Motor neuron (in vitro differentiated cells): ENCODE measurements at regions of chr1 and their contacts with region 1.

Region 1: DNA sequence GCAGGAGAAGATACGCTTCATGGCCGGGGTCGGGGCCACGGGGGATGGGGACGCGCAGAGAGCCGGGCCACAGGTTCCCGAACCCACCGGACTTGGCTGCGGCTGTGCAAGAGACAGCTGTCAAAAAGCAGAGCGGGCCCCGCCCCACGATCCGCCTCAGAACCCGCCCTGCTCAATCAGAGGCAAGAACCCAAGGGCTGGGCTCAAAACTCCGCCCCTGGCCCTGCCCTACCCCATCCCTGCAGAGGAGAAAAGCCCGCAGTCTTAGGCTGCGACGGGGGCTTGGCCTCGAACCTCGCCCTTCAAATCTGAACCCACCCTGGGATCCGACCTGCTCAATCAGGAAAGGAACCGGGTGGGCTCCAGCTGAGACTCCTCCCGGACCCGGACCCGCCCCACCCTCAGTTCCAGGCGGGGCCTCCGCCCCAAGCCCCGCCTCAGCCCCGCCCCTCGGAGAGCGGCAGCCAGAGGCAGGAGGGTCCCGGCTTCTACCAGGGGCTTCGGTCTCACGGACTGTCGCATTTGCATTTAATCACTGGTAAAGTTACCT is at the start of gene ANKRD35:
- ATAC-seq: peak; percentile 97 to 100 (median 98)
- H3K4me3 ChIP-seq: peak within 1 kb of the TSS; percentile 50 to 70 (median 63)
- H3K27ac ChIP-seq: no peak within 1 kb of the TSS
- H3K4me1 ChIP-seq: peaks cover 5 to 6% of the 10 kb centered on the region in 2 donors
- total RNA-seq, gene ANKRD35: 0.15 to 1.4 (median 0.32) TPM in 6 of 8 experiments, not detected in the others

Region 2: DNA sequence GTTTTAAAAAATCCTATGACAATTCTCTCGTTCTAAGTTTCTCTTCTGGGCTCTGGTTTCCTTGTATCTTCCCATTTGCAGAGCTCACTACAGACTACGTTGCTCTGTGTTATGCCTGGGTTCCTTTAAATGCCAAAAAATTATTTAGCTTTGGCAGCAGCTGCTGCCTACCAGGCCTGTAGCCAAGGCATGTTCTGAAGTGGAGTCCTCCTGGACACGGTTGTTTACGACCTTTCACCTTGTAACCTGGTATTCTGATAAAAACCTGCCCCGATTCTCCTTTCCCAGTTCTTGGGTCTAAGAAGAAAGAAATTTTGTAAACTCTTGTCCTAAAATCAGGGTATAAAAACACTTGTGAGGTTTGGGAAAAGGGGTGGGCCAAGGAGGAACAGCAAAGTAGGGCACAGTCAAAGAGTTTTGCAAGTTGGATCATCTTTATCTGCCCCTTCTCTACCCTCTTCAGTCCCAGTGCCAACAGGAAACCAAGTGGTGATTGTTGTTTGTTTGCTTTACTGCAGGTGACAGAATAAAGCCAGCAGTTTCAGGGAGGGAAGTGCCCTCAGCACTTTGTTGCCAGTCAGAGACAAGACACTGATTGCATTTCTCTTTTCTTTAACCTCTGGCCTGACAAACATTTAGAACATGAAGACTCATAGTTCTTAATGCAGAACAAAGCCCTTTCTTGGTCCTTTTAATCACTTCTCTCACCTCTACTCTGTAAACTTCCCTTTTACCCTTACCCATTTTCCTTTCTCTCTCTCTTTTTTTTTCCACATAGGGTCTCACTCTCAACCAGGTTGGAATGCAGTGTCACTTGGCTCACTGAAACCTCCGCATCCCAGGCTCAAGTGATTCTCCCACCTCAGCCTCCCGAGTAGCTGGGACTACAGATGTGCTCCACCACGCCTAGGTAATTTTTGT is 113.8 kb after region 1 on chr1:
- in situ Hi-C with region 1: loop called in 1 of 9 experiments (anchors 10 kb)
- ATAC-seq: no peak
- H3K4me3 ChIP-seq: no peak overlapping the region
- H3K27ac ChIP-seq: no peak overlapping the region
- H3K4me1 ChIP-seq: peaks cover 8 to 10% of the 10 kb centered on the region in 2 donors